PC-9 (cell line): ENCODE measurements at regions of chr20 and their contacts with region 1.

Region 1: GRCh38 chr20:19779634-19780033 is 21.6 kb downstream of the RIN2 start:
- DNase-seq: no peak
- H3K4me3 ChIP-seq: no peak overlapping the region
- H3K27ac ChIP-seq: no peak overlapping the region
- H3K4me1 ChIP-seq: peaks cover 30% of the 10 kb centered on the region
- H3K27me3 ChIP-seq: no peaks in the 10 kb centered on the region
- CTCF ChIP-seq: no peak

Region 2: GRCh38 chr20:18984238-18985200 is 795.1 kb before region 1 on chr20:
- CTCF ChIA-PET with region 1: no interaction called
- POLR2A ChIA-PET with region 1: no interaction called
- intact Hi-C with region 1: no loop called
- DNase-seq: no peak
- H3K4me3 ChIP-seq: no peak overlapping the region
- H3K27ac ChIP-seq: no peak overlapping the region
- H3K4me1 ChIP-seq: no peaks in the 10 kb centered on the region
- H3K27me3 ChIP-seq: no peaks in the 10 kb centered on the region
- CTCF ChIP-seq: no peak

Region 3: DNA sequence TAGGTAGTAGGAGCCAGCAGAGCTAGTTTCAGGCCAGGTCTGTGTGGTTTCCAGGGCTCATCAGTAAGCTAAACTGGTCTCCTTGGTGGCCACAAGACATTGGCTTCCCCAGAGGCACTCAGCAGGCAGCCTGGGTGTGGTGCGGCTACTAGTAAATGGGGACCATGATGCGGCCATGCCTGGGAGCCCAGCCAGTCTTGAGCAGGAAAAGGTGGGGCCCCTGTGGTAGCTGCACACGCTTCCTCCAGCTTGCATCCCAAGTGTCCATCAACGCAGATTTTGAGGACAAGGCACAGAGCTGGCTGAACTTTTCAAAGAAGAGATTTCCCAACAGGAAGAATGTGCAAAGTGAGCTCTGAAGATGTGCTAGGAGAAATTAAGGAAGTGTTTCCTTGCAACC is 130.1 kb after region 1 on chr20:
- CTCF ChIA-PET with region 1: no interaction called
- POLR2A ChIA-PET with region 1: no interaction called
- intact Hi-C with region 1: no loop called
- DNase-seq: peak in 1 of 2 experiments; percentile 67
- H3K4me3 ChIP-seq: no peak overlapping the region
- H3K27ac ChIP-seq: no peak overlapping the region
- H3K4me1 ChIP-seq: peaks cover 11% of the 10 kb centered on the region
- H3K27me3 ChIP-seq: no peaks in the 10 kb centered on the region
- CTCF ChIP-seq: no peak

Region 4: GRCh38 chr20:19934792-19935491 is 155.3 kb after region 1 on chr20:
- CTCF ChIA-PET with region 1: no interaction called
- POLR2A ChIA-PET with region 1: interaction called, 21 read pairs
- intact Hi-C with region 1: no loop called
- DNase-seq: peak; percentile 62 to 73
- H3K4me3 ChIP-seq: peak overlapping the region; percentile 48; the same call in 1 of the 2 replicates
- H3K27ac ChIP-seq: peak overlapping the region; percentile 86
- H3K4me1 ChIP-seq: peaks cover 32% of the 10 kb centered on the region
- H3K27me3 ChIP-seq: no peaks in the 10 kb centered on the region
- CTCF ChIP-seq: no peak